ENCODE measurements at regions of chr15 and their contacts with region 1.

Region 1: DNA sequence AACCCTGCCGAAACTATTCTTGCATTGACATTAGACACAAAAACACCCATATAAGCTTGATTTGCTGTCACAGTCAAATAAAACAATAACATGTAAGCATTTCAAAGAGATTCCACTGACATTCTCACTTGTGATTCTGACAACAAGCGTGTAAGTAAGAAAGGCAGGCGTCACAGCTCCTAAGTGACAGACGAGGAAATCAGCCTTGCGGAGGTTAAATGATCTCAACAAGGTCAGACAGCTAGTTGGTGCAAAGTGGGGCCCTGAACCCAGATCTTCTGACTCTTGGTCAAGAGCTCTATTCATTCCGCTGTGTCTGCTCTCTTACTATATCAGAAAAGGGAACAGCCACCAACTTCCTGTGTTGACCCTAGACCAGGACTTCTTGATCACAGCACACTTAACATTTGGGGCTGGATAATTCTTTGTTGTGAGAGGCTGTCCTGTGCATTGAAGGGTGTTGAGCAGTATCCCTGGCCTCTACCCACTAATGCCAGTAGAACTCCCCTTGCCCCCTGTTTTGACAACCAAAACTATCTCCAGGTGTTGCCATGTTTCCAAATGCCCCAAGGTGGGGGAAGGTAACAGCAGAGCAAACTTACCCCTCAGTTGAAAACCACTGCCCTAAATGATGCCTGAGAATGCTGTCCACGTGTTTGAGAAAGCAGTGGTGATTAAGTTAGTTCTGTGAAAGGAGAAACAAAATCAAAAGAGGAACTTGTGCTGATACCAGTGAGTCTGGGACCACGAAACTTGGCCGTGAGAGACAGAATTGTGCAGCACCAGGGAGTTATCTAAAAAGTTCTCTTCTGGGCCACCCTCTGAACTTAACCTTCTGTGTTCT is 86.1 kb downstream of the LIPC start:
- DNase-seq: peak; percentile 43
- ATAC-seq: peak; percentile 54
- H3K4me3 Mint-ChIP-seq: no peak overlapping the region
- H3K27ac Mint-ChIP-seq: peak overlapping the region; percentile 83
- H3K4me1 Mint-ChIP-seq: peaks cover 54% of the 10 kb centered on the region
- H3K27me3 Mint-ChIP-seq: no peaks in the 10 kb centered on the region
- CTCF ChIP-seq: no peak

Region 2: DNA sequence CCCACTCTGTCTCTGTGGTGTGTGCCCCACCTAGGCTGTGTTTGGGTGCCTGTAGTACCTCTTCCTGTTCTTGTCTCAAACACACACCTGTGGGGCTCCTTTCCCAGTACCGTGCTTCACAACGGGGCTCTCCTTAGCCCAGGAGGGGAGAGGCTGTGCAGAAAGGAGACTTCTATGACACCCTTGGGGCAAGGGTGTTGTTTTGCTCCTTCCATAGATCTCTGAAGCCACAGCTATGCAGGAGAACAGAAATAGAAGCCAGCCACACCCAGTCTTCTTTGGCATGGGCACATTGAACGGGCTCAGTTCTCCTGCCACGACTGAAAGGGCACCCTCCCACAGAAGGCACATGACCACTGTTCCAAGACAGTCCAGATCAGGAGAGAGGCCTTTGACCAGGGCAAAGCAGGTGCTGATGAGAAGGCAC is 11.8 kb before region 1 on chr15:
- CTCF ChIA-PET with region 1: interaction called, 14 read pairs
- POLR2A ChIA-PET with region 1: interaction called, 6 read pairs
- intact Hi-C with region 1: no loop called
- DNase-seq: no peak
- ATAC-seq: no peak
- H3K4me3 Mint-ChIP-seq: no peak overlapping the region
- H3K27ac Mint-ChIP-seq: no peak overlapping the region
- H3K4me1 Mint-ChIP-seq: peaks cover 19% of the 10 kb centered on the region
- H3K27me3 Mint-ChIP-seq: no peaks in the 10 kb centered on the region
- CTCF ChIP-seq: no peak

Region 3: GRCh38 chr15:58546635-58547627 is 29.0 kb after region 1 on chr15:
- CTCF ChIA-PET with region 1: no interaction called
- POLR2A ChIA-PET with region 1: no interaction called
- intact Hi-C with region 1: no loop called
- DNase-seq: no peak
- ATAC-seq: no peak
- H3K4me3 Mint-ChIP-seq: no peak overlapping the region
- H3K27ac Mint-ChIP-seq: peak overlapping the region; percentile 70
- H3K4me1 Mint-ChIP-seq: peaks cover 38% of the 10 kb centered on the region
- H3K27me3 Mint-ChIP-seq: no peaks in the 10 kb centered on the region
- CTCF ChIP-seq: no peak

Region 4: DNA sequence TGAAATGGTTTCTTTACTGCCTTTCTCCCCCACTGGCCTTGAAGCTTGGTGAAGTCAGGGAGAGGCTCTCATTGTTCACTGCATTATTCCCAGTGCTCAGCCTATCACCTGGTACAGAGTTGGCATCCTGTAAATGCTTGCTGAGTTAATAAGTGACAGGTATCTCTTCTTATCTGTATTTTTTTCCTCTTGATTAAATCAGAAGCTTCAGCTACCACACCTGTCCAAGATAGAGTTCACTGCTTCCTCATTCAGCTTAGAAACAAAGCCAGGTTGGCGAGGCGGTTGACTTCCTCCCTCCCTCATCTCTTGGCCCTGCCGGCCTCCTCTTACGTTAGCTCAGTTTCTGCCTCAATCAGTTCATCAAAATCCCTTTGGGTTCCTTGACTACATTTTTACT is 56.7 kb after region 1 on chr15:
- CTCF ChIA-PET with region 1: no interaction called
- POLR2A ChIA-PET with region 1: no interaction called
- intact Hi-C with region 1: no loop called
- DNase-seq: no peak
- ATAC-seq: no peak
- H3K4me3 Mint-ChIP-seq: no peak overlapping the region
- H3K27ac Mint-ChIP-seq: no peak overlapping the region
- H3K4me1 Mint-ChIP-seq: peaks cover 3% of the 10 kb centered on the region
- H3K27me3 Mint-ChIP-seq: no peaks in the 10 kb centered on the region
- CTCF ChIP-seq: no peak

Region 5: DNA sequence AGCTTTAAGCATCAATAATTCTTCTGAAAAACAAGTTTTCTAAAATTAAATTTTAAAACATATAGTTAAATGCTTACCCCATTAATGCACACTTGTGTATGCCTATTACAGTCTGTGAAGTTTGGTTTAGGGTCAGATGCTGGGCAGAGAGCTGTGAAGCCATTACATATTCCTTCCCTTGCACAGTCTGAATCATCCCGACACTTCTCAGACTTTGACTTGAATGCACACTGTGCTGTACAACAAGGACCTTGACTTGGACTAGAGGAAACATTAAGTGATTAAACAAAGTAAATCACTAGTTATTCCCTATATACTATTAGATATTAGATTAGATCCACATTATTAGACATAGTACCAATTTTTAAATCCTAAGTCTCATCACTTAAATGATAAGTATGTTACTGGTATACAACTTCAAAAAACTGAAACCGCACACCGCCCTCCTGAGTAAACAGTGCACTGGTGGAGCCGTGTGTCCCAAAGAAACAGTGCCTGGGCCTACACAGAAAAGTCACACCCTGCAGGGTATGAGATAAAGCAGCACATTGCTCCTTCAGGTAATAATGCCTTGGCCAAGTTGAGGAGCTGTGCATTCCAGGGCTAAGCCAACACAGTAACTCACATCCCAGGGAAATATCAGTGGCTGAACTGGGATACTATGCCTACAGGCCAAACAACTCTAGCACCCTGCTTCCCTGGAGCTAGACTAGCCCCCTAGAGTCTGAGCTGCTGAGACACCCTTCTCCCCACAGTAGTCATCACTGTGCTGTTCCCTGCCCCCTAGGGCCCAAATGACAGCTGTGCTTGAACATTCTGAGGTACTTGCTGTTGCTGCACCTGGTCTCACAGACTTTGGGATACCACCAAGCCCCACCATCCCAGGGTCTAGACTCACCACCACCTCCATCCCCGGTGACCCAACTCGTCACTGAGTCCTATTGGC is 94.1 kb after region 1 on chr15:
- CTCF ChIA-PET with region 1: no interaction called
- POLR2A ChIA-PET with region 1: no interaction called
- intact Hi-C with region 1: no loop called
- DNase-seq: no peak
- ATAC-seq: no peak
- H3K4me3 Mint-ChIP-seq: no peak overlapping the region
- H3K27ac Mint-ChIP-seq: no peak overlapping the region
- H3K4me1 Mint-ChIP-seq: peaks cover 22% of the 10 kb centered on the region
- H3K27me3 Mint-ChIP-seq: no peaks in the 10 kb centered on the region
- CTCF ChIP-seq: no peak